H1 (cell line): ENCODE measurements at regions of chr10 and their contacts with region 1.

Region 1: GRCh38 chr10:113802997-113803396 is 50.9 kb downstream of the DCLRE1A start:
- DNase-seq: no peak
- H3K4me3 ChIP-seq: no peak overlapping the region
- H3K27ac ChIP-seq: no peak overlapping the region
- H3K4me1 ChIP-seq: no peaks in the 10 kb centered on the region
- H3K27me3 ChIP-seq: no peaks in the 10 kb centered on the region
- CTCF ChIP-seq: no peak
- EP300 ChIP-seq: no peak
- POLR2A ChIP-seq: no peak
- RAD21 ChIP-seq: no peak

Region 2: GRCh38 chr10:113689057-113689456 is 113.9 kb before region 1 on chr10:
- CTCF ChIA-PET with region 1: no interaction called
- POLR2A ChIA-PET with region 1: no interaction called
- DNase-seq: no peak
- H3K4me3 ChIP-seq: no peak overlapping the region
- H3K27ac ChIP-seq: no peak overlapping the region
- H3K4me1 ChIP-seq: peaks cover 0 to 4% (median 0%) of the 10 kb centered on the region in 4 experiments; a peak in 1 of 7 replicates
- H3K27me3 ChIP-seq: no peaks in the 10 kb centered on the region
- CTCF ChIP-seq: no peak
- EP300 ChIP-seq: no peak
- POLR2A ChIP-seq: no peak
- RAD21 ChIP-seq: no peak

Region 3: DNA sequence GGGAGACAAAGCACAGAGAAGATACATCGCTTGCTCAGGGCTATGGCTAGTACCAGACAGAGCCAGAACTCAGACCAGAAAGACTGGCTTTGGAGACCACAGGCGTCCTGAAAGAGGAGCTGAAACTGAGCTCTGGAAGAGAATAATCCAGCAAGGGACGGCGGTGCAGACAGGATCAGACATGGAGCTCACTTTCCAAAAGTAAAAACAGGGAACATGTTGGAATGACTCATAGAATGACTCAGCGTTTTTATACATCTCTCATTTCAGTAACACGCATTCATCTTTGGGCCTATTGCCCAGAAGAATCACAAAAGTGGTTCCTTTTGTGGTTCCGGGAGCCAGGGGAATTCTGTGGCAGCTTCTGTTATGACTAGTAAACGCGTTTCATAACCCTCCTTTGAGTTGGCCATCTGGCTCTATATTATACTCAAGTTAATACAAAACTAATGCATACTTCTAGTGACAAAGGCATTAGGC is 14.4 kb before region 1 on chr10:
- CTCF ChIA-PET with region 1: interaction called, 29 read pairs
- POLR2A ChIA-PET with region 1: no interaction called
- DNase-seq: no peak
- H3K4me3 ChIP-seq: no peak overlapping the region
- H3K27ac ChIP-seq: no peak overlapping the region
- H3K4me1 ChIP-seq: no peaks in the 10 kb centered on the region
- H3K27me3 ChIP-seq: no peaks in the 10 kb centered on the region
- CTCF ChIP-seq: no peak
- EP300 ChIP-seq: no peak
- POLR2A ChIP-seq: no peak
- RAD21 ChIP-seq: no peak

Region 4: DNA sequence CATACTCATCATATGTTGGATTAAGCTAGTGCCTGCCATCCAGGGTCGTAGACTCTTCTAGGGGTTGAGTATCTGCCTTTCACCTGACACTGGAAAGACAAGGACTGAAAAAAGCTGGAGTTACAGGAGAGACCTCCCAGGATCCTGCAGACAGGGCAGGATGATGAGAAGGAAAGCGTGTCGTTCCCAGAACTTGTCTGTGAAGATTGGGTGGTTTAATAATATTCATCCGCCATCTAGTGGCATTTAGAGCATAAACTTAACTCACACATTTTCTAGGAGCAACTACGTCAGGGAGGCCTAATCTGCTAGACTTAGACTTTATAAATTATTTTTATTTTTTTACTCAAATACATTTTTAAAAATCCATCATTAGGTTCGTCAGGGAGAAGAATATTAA is 300.3 kb after region 1 on chr10:
- CTCF ChIA-PET with region 1: interaction called, 33 read pairs
- POLR2A ChIA-PET with region 1: no interaction called
- DNase-seq: no peak
- H3K4me3 ChIP-seq: no peak overlapping the region
- H3K27ac ChIP-seq: no peak overlapping the region
- H3K4me1 ChIP-seq: peaks cover 0 to 3% (median 0%) of the 10 kb centered on the region in 4 experiments; a peak in 3 of 7 replicates
- H3K27me3 ChIP-seq: peaks cover 3 to 22% (median 21%) of the 10 kb centered on the region in 4 experiments
- CTCF ChIP-seq: peak in 2 of 3 experiments; percentile 38 to 48; a peak in 2 of 4 replicates
- EP300 ChIP-seq: no peak
- POLR2A ChIP-seq: no peak
- RAD21 ChIP-seq: peak; percentile 71 to 72

Region 5: GRCh38 chr10:114110174-114110972 is 307.4 kb after region 1 on chr10:
- CTCF ChIA-PET with region 1: interaction called, 18 read pairs
- POLR2A ChIA-PET with region 1: no interaction called
- DNase-seq: no peak
- H3K4me3 ChIP-seq: no peak overlapping the region
- H3K27ac ChIP-seq: no peak overlapping the region
- H3K4me1 ChIP-seq: no peaks in the 10 kb centered on the region
- H3K27me3 ChIP-seq: no peaks in the 10 kb centered on the region
- CTCF ChIP-seq: peak; percentile 4 to 55 (median 45)
- EP300 ChIP-seq: no peak
- POLR2A ChIP-seq: no peak
- RAD21 ChIP-seq: peak; percentile 68 to 70